CD4-positive, alpha-beta memory T cell (primary cell): ENCODE measurements at regions of chr5 and their contacts with region 1.

Region 1: DNA sequence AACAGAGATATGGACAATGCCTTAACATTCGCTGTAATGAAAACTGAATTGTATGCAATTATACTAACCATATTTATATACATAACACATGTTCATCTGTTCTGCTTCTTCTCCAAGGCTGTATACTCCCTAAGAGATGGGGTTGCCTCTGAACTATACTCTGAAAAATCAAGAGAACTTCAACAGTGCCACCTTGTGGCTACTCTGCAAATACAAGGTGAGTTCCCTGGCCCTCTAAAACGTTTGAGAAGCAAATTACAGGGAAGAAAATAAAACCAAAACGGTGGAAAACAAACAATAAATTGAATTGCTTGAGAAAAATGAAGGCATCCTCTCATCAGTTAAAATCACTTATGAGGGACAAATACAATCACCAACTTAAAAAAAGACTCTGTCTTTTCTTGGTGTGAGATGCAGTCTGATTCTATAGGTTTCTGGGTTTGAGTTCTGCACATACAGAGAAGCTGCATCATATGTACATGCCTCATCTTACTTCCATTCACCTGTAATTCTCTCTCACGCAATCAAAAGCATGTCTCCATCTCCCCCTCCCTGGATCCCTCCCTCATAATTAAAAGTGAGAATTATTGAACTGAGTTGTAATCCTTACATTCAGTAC is 98.6 kb downstream of the FBXW11 start:
- DNase-seq: peak; percentile 43 to 52 (median 45)
- H3K4me3 ChIP-seq: no peak overlapping the region
- H3K4me3 Mint-ChIP-seq: no peak overlapping the region
- H3K27ac ChIP-seq: no peak overlapping the region
- H3K27ac Mint-ChIP-seq: peak overlapping the region in 2 of 7 donors; percentile 4 to 35
- H3K4me1 ChIP-seq: peaks cover 38% of the 10 kb centered on the region
- H3K4me1 Mint-ChIP-seq: peaks cover 34 to 47% (median 41%) of the 10 kb centered on the region in 4 donors
- H3K27me3 ChIP-seq: no peaks in the 10 kb centered on the region
- H3K27me3 Mint-ChIP-seq: no peaks in the 10 kb centered on the region

Region 2: DNA sequence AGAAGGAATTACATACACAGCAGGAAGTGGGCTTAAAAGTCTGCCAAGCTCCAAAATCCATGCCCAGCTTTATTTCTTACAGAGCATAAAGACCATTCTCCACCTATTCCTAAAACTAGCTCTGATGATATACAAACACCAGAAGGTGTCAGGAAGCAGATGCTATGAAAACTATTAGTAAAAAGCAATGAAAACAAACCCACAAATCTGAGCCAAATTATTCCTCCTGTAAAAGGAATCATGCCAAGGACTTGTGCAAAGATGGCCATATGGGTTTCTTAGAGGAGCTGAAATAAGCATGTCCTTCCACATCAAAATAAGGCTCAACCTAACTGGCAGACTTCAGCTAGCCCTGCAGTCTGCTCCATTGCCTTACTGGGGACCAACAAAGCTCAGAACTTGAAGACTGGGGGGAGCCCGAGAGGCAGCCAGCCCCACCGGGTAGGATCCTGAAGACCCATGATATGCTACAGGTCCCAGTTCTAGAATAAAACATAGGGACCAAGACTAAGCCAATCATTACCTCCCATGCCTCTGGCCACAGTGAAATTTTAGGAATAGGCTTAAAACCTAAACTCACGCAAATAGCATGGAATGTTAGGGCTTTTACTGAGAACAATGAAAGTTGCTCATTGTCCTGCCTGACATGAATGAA is 1167.2 kb before region 1 on chr5:
- CTCF ChIA-PET with region 1: no interaction called
- POLR2A ChIA-PET with region 1: no interaction called
- intact Hi-C with region 1: loop called (anchors 5 kb)
- DNase-seq: no peak
- H3K4me3 ChIP-seq: no peak overlapping the region
- H3K4me3 Mint-ChIP-seq: no peak overlapping the region
- H3K27ac ChIP-seq: no peak overlapping the region
- H3K27ac Mint-ChIP-seq: no peak overlapping the region
- H3K4me1 ChIP-seq: no peaks in the 10 kb centered on the region
- H3K4me1 Mint-ChIP-seq: peaks cover 0 to 4% (median under 1%) of the 10 kb centered on the region in 4 donors
- H3K27me3 ChIP-seq: no peaks in the 10 kb centered on the region
- H3K27me3 Mint-ChIP-seq: peaks cover 14 to 19% of the 10 kb centered on the region in 2 donors

Region 3: GRCh38 chr5:171418316-171418981 is 489.4 kb before region 1 on chr5:
- CTCF ChIA-PET with region 1: interaction called, 21 read pairs
- POLR2A ChIA-PET with region 1: interaction called, 4 read pairs
- intact Hi-C with region 1: loop called (anchors 1 kb)
- DNase-seq: peak in 4 of 5 donors; percentile 24 to 37 (median 33)
- H3K4me3 ChIP-seq: peak overlapping the region; percentile 11 to 58
- H3K4me3 Mint-ChIP-seq: peak overlapping the region; percentile 63 to 84 (median 78)
- H3K27ac ChIP-seq: no peak overlapping the region
- H3K27ac Mint-ChIP-seq: peak overlapping the region in 2 of 7 donors; percentile 46 to 54
- H3K4me1 ChIP-seq: peaks cover 20% of the 10 kb centered on the region
- H3K4me1 Mint-ChIP-seq: peaks cover 5 to 20% (median 13%) of the 10 kb centered on the region in 4 donors
- H3K27me3 ChIP-seq: peaks cover 10% of the 10 kb centered on the region
- H3K27me3 Mint-ChIP-seq: peaks cover 7 to 9% of the 10 kb centered on the region in 2 donors

Region 4: DNA sequence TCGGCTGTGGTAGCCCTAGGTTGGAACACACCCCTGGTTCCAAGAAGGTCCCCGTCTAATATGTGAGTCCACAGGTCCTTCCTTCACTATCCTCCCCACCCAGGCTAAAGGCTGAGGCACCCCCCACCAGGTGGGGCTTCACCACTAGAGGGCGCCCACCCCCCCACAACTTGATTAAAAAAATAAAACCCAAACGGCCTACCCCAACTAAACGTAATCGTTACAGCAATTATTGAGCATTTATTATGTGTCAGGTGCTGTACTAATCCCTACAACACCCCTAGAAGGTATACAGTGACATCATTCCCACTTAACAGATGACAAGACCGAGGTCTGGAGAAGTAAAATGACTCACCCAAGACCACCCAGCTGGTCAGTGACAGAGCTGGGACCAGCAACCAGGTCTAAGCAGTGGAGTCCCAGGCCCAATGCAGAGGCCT is 423.4 kb before region 1 on chr5:
- CTCF ChIA-PET with region 1: interaction called, 3 read pairs
- POLR2A ChIA-PET with region 1: no interaction called
- intact Hi-C with region 1: loop called (anchors 1 kb)
- DNase-seq: peak in 3 of 5 donors; percentile 14 to 37 (median 22)
- H3K4me3 ChIP-seq: no peak overlapping the region
- H3K4me3 Mint-ChIP-seq: no peak overlapping the region
- H3K27ac ChIP-seq: no peak overlapping the region
- H3K27ac Mint-ChIP-seq: no peak overlapping the region
- H3K4me1 ChIP-seq: peaks cover 4% of the 10 kb centered on the region
- H3K4me1 Mint-ChIP-seq: peaks cover 0 to 7% (median 2%) of the 10 kb centered on the region in 4 donors
- H3K27me3 ChIP-seq: no peaks in the 10 kb centered on the region
- H3K27me3 Mint-ChIP-seq: peaks cover 2 to 13% of the 10 kb centered on the region in 2 donors

Region 5: GRCh38 chr5:172042181-172042580 is 134.3 kb after region 1 on chr5:
- CTCF ChIA-PET with region 1: interaction called, 63 read pairs
- POLR2A ChIA-PET with region 1: no interaction called
- intact Hi-C with region 1: no loop called
- DNase-seq: no peak
- H3K4me3 ChIP-seq: no peak overlapping the region
- H3K4me3 Mint-ChIP-seq: no peak overlapping the region
- H3K27ac ChIP-seq: no peak overlapping the region
- H3K27ac Mint-ChIP-seq: peak overlapping the region in 3 of 7 donors; percentile 62 to 84 (median 69)
- H3K4me1 ChIP-seq: no peaks in the 10 kb centered on the region
- H3K4me1 Mint-ChIP-seq: peaks cover 8 to 9% (median 8%) of the 10 kb centered on the region in 4 donors
- H3K27me3 ChIP-seq: no peaks in the 10 kb centered on the region
- H3K27me3 Mint-ChIP-seq: no peaks in the 10 kb centered on the region

Region 6: DNA sequence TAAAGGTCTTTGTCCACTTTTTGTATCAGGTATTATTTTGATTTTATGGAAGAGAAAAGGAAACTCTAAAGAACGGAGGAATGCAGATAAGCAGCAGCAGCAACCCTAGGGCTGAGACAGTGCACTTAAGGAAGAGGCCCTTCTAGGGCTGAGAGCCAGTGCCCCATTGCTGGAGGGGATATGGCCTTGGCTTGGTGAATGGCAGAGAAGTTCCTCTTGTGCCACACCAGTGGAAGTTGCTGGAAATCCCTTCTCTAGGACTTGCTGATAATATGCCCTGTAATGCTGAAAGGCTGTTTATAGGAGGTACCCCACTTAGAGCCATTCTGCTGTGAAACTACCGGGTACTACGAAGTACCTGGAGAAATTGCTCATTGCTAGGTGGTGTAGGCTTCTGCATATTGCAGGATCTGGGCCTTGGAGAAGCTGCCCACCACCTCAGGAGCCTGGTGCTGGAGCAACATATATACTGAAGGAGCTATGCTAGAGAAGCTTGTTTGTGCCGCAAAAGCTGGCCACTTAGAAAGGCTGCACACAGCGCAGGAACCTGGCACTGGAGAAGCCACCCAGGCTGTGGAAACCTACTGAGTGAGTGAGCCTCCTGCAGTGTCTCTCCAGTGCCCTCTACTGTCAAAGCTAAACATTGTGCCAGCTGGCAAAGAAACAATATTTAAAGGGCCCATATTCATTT is 385.4 kb after region 1 on chr5:
- CTCF ChIA-PET with region 1: interaction called, 57 read pairs
- POLR2A ChIA-PET with region 1: no interaction called
- intact Hi-C with region 1: loop called (anchors 1 kb)
- DNase-seq: peak; percentile 64 to 73 (median 65)
- H3K4me3 ChIP-seq: no peak overlapping the region
- H3K4me3 Mint-ChIP-seq: no peak overlapping the region
- H3K27ac ChIP-seq: no peak overlapping the region
- H3K27ac Mint-ChIP-seq: peak overlapping the region in 1 of 7 donors; percentile 49
- H3K4me1 ChIP-seq: no peaks in the 10 kb centered on the region
- H3K4me1 Mint-ChIP-seq: peaks cover 0 to 4% (median 2%) of the 10 kb centered on the region in 4 donors
- H3K27me3 ChIP-seq: no peaks in the 10 kb centered on the region
- H3K27me3 Mint-ChIP-seq: peaks cover 2 to 3% of the 10 kb centered on the region in 2 donors